Caco-2 (cell line): ENCODE measurements at regions of chr1 and their contacts with region 1.

Region 1: GRCh38 chr1:15526490-15527339 is at the start of gene DNAJC16:
- DNase-seq: peak; percentile 98 to 99
- H3K4me3 ChIP-seq: peak within 1 kb of the TSS; percentile 52
- H3K4me3 Mint-ChIP-seq: peak within 1 kb of the TSS; percentile 81
- H3K27ac Mint-ChIP-seq: peak within 1 kb of the TSS; percentile 96
- H3K4me1 ChIP-seq: peaks cover 8% of the 10 kb centered on the region; the same call in 1 of the 2 replicates
- H3K4me1 Mint-ChIP-seq: peaks cover 9% of the 10 kb centered on the region
- H3K27me3 ChIP-seq: no peaks in the 10 kb centered on the region
- H3K27me3 Mint-ChIP-seq: no peaks in the 10 kb centered on the region
- CTCF ChIP-seq: peak in 1 of 2 experiments; percentile 21
- total RNA-seq, gene DNAJC16: 15.1 and 17.2 TPM in 2 replicates

Region 2: GRCh38 chr1:15559294-15559761 is 32.6 kb after region 1 on chr1:
- CTCF ChIA-PET with region 1: no interaction called
- POLR2A ChIA-PET with region 1: no interaction called
- intact Hi-C with region 1: no loop called
- DNase-seq: no peak
- H3K4me3 ChIP-seq: no peak overlapping the region
- H3K4me3 Mint-ChIP-seq: no peak overlapping the region
- H3K27ac Mint-ChIP-seq: no peak overlapping the region
- H3K4me1 ChIP-seq: peaks cover 7% of the 10 kb centered on the region; the same call in 1 of the 2 replicates
- H3K4me1 Mint-ChIP-seq: no peaks in the 10 kb centered on the region
- H3K27me3 ChIP-seq: no peaks in the 10 kb centered on the region
- H3K27me3 Mint-ChIP-seq: no peaks in the 10 kb centered on the region
- CTCF ChIP-seq: no peak

Region 3: DNA sequence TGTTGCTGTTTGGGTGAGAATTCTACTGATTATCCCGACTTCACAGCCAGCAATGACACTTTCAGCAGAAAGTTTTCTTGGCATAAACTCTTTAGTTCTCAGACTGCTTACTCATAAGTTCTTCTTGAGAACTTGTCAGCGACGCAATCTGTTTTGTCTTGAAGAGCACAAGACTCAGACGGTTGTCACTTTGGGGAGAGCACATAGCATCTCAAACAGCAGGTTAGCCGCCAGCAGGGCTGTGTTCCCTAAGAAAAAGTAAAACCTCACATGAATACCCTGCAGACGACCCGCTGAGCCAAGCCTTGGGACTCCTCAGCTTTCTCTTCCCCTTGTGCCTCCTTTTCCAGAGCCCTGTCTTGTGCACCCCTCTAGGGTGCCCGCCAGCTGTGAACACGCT is 46.8 kb after region 1 on chr1:
- CTCF ChIA-PET with region 1: no interaction called
- POLR2A ChIA-PET with region 1: no interaction called
- intact Hi-C with region 1: no loop called
- DNase-seq: no peak
- H3K4me3 ChIP-seq: no peak overlapping the region
- H3K4me3 Mint-ChIP-seq: no peak overlapping the region
- H3K27ac Mint-ChIP-seq: no peak overlapping the region
- H3K4me1 ChIP-seq: no peaks in the 10 kb centered on the region
- H3K4me1 Mint-ChIP-seq: no peaks in the 10 kb centered on the region
- H3K27me3 ChIP-seq: no peaks in the 10 kb centered on the region
- H3K27me3 Mint-ChIP-seq: no peaks in the 10 kb centered on the region
- CTCF ChIP-seq: no peak

Region 4: DNA sequence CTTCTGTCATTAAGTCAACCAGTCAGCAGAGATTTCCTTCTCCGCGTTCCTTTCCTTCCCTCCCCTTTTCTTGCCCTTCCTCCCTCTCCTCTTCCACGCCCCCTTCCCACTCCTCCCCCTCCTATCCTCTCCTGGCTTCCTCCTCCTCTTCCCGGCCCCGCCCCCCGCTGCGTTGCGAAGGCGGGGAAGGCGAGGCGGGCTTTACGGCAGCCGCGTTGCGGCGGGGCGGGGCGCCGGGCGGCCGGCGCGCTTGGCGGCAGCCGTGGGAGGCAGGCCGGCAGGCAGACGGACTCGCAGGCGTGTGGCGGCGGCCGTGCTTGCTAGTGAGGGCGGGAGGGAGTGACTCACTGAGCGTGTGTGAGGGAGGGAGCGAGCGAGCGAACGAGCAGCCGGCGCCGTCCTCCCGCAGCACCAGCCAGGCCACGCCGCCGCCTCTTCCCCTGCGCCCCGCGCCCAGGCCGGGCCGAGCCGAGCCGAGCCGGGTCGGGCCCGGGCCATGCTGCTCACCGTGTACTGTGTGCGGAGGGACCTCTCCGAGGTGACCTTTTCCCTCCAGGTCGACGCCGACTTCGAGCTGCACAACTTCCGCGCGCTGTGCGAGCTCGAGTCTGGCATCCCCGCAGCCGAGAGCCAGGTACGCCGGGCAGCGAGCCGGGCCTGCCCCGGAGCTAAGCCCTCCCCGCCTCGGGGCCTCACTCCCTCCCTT is 90.6 kb after region 1 on chr1 and contains the start of gene DDI2:
- CTCF ChIA-PET with region 1: no interaction called
- POLR2A ChIA-PET with region 1: no interaction called
- intact Hi-C with region 1: loop called (anchors 1 kb)
- DNase-seq: peak; percentile 96 to 97
- H3K4me3 ChIP-seq: peak within 1 kb of the TSS; percentile 95
- H3K4me3 Mint-ChIP-seq: peak within 1 kb of the TSS; percentile 88
- H3K27ac Mint-ChIP-seq: peak within 1 kb of the TSS; percentile 86
- H3K4me1 ChIP-seq: peaks cover 33% of the 10 kb centered on the region
- H3K4me1 Mint-ChIP-seq: peaks cover 27% of the 10 kb centered on the region
- H3K27me3 ChIP-seq: no peaks in the 10 kb centered on the region
- H3K27me3 Mint-ChIP-seq: no peaks in the 10 kb centered on the region
- CTCF ChIP-seq: no peak
- total RNA-seq, gene DDI2: 53.1 and 53.4 TPM in 2 replicates

Region 5: GRCh38 chr1:15640667-15641066 is 114.0 kb after region 1 on chr1:
- CTCF ChIA-PET with region 1: no interaction called
- POLR2A ChIA-PET with region 1: no interaction called
- intact Hi-C with region 1: no loop called
- DNase-seq: no peak
- H3K4me3 ChIP-seq: no peak overlapping the region
- H3K4me3 Mint-ChIP-seq: no peak overlapping the region
- H3K27ac Mint-ChIP-seq: no peak overlapping the region
- H3K4me1 ChIP-seq: no peaks in the 10 kb centered on the region
- H3K4me1 Mint-ChIP-seq: no peaks in the 10 kb centered on the region
- H3K27me3 ChIP-seq: no peaks in the 10 kb centered on the region
- H3K27me3 Mint-ChIP-seq: no peaks in the 10 kb centered on the region
- CTCF ChIP-seq: no peak

Region 6: GRCh38 chr1:15741183-15741850 is 214.6 kb after region 1 on chr1:
- CTCF ChIA-PET with region 1: interaction called, 8 read pairs
- POLR2A ChIA-PET with region 1: no interaction called
- intact Hi-C with region 1: loop called (anchors 1 kb)
- DNase-seq: peak; percentile 89
- H3K4me3 ChIP-seq: peak overlapping the region; percentile 0; the same call in 1 of the 2 replicates
- H3K4me3 Mint-ChIP-seq: peak overlapping the region; percentile 66
- H3K27ac Mint-ChIP-seq: peak overlapping the region; percentile 82
- H3K4me1 ChIP-seq: peaks cover 17% of the 10 kb centered on the region
- H3K4me1 Mint-ChIP-seq: peaks cover 7% of the 10 kb centered on the region
- H3K27me3 ChIP-seq: no peaks in the 10 kb centered on the region
- H3K27me3 Mint-ChIP-seq: no peaks in the 10 kb centered on the region
- CTCF ChIP-seq: peak; percentile 82 to 92

Region 7: DNA sequence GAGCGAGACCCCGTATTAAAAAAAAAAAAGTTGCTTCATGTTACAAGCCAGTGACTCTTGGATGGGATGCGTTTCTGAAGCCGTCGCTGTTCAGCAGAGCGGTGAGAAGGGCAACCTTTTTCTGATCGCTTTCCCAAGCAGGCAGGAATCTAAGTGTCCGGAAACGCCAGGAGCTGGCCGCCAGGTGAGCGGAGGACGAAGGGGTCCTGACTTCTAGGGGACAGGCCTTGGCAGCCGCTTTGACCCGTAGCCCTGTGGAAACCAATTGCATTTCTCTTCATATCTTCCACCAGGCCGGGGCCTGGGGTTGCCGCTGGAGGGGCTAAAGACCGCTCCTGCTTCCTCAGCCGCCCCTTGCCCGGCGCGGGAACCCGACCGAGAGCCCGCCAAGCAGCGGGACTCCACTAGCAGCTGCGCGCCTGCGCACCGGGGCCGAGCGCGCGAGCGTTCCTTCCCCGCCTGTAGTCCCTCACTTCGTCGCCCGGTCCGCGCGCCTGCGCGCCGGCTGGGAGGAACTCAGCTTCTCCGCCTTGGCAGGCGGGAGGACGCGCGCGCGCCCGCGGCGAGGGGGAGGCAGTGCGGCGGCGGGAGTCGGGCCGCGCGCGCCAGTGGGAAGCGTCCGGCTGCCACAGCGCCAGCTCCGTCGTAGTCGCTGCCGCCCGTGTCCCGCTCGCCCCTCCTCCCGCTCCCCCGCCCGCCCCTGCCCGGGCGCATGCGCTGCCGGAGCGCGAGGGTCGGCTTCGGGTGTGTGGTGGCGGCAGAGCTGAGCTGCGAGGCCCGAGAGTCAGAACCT is 320.6 kb after region 1 on chr1 and contains the start of gene SPEN:
- CTCF ChIA-PET with region 1: no interaction called
- POLR2A ChIA-PET with region 1: no interaction called
- intact Hi-C with region 1: loop called (anchors 5 kb)
- DNase-seq: peak; percentile 96 to 98
- H3K4me3 ChIP-seq: peak within 1 kb of the TSS; percentile 75
- H3K4me3 Mint-ChIP-seq: peak within 1 kb of the TSS; percentile 95
- H3K27ac Mint-ChIP-seq: peak within 1 kb of the TSS; percentile 95
- H3K4me1 ChIP-seq: peaks cover 14% of the 10 kb centered on the region
- H3K4me1 Mint-ChIP-seq: no peaks in the 10 kb centered on the region
- H3K27me3 ChIP-seq: no peaks in the 10 kb centered on the region
- H3K27me3 Mint-ChIP-seq: no peaks in the 10 kb centered on the region
- CTCF ChIP-seq: no peak
- total RNA-seq, gene SPEN: 46.4 and 47.3 TPM in 2 replicates

Region 8: GRCh38 chr1:16366722-16367257 is 840.1 kb after region 1 on chr1 and contains the start of gene SZRD1:
- CTCF ChIA-PET with region 1: no interaction called
- POLR2A ChIA-PET with region 1: no interaction called
- intact Hi-C with region 1: loop called (anchors 5 kb)
- DNase-seq: peak; percentile 93 to 96
- H3K4me3 ChIP-seq: peak within 1 kb of the TSS; percentile 78
- H3K4me3 Mint-ChIP-seq: peak within 1 kb of the TSS; percentile 86
- H3K27ac Mint-ChIP-seq: peak within 1 kb of the TSS; percentile 93
- H3K4me1 ChIP-seq: peaks cover 12% of the 10 kb centered on the region
- H3K4me1 Mint-ChIP-seq: peaks cover 8% of the 10 kb centered on the region
- H3K27me3 ChIP-seq: no peaks in the 10 kb centered on the region
- H3K27me3 Mint-ChIP-seq: no peaks in the 10 kb centered on the region
- CTCF ChIP-seq: no peak
- total RNA-seq, gene SZRD1: 93.8 and 98.7 TPM in 2 replicates